Gastrocnemius medialis (tissue), 4 donors: ENCODE measurements at regions of chr22 and their contacts with region 1.

Region 1: DNA sequence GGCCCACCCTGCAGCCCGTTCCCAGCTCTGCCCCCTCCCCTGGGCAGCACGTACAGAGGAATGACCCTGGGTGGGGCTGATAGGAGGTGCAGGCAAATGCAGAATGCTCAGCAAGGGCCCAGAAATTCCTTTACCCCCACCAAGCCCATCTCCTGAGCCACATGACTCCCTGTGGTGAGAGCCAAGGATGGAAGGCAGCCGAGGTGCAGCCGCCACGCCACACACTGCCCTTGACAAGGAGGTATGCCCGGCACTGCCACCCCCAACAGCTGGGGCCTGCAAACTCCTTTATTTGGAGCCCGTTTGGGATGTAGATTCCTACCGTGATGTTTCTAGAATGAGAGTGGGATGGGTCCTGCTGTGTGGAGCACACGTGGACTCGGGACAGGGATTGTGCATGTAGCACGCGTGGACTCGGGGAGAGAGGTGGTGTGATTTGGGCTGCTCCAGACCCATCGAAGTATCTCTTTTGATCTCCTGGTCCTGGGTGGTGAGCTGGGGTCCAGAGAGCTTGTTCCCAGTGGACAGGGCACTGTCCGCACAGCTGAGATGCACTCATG is 12.9 kb downstream of the GTSE1 start:
- DNase-seq: no peak
- ATAC-seq: no peak
- H3K4me3 ChIP-seq: no peak overlapping the region
- H3K27ac ChIP-seq: no peak overlapping the region
- H3K4me1 ChIP-seq: peaks cover 0 to 5% of the 10 kb centered on the region in 2 donors
- H3K27me3 ChIP-seq: no peaks in the 10 kb centered on the region
- CTCF ChIP-seq: no peak
- POLR2A ChIP-seq: no peak

Region 2: GRCh38 chr22:46006379-46007002 is 303.1 kb before region 1 on chr22:
- in situ Hi-C with region 1: loop called in 1 of 4 experiments (anchors 10 kb)
- intact Hi-C with region 1: no loop called
- DNase-seq: peak; percentile 78 to 91
- ATAC-seq: peak; percentile 77 to 78
- H3K4me3 ChIP-seq: peak overlapping the region in 3 of 4 donors; percentile 8 to 29 (median 27)
- H3K27ac ChIP-seq: peak overlapping the region; percentile 84 to 96 (median 92)
- H3K4me1 ChIP-seq: peaks cover 30 to 40% of the 10 kb centered on the region in 2 donors
- H3K27me3 ChIP-seq: no peaks in the 10 kb centered on the region
- CTCF ChIP-seq: peak; percentile 93 to 99 (median 98)
- POLR2A ChIP-seq: no peak

Region 3: GRCh38 chr22:46122511-46122971 is 187.1 kb before region 1 on chr22:
- in situ Hi-C with region 1: loop called (anchors 5 to 10 kb)
- intact Hi-C with region 1: loop called (anchors 1 kb)
- DNase-seq: peak in 1 of 2 donors; percentile 65
- ATAC-seq: peak; percentile 52 to 72
- H3K4me3 ChIP-seq: peak overlapping the region in 1 of 4 donors; percentile 29
- H3K27ac ChIP-seq: no peak overlapping the region
- H3K4me1 ChIP-seq: peaks cover 4% of the 10 kb centered on the region in 2 donors
- H3K27me3 ChIP-seq: no peaks in the 10 kb centered on the region
- CTCF ChIP-seq: peak; percentile 94 to 99 (median 98)
- POLR2A ChIP-seq: no peak